ENCODE measurements at regions of chr5 and their contacts with region 1.

Region 1: DNA sequence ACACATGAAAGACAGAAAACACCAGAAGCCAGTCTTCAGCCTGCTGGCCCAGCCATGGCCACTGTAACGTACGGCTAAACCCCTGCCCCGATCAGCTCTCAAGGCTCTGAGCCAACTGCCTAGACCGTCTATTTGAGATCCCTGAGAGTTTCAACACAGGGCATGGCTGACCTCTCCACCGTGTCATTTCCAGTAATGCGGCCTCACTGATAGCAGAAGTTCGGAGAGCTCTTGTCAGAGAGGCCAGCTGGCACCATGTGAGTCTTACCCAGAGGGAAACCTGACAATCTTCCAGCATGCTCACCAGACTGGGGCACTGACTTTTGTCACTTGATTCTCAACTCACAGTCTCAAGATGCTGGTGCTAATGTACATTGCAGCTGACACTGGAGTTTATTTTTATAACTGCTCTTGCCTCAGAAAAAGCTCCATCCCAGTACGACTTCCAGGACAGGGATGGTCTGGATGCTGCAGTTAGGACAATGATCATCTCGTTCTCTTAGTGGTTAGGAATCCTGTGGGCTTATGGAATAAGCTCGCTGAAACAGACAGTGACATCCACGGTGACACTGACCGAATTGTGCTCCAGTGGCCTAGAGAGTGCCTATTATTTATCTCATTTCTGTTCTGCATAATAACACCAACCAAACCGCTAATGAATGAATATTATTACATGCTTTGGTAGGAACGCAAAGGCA is 372.7 kb downstream of the ICE1 start:
- DNase-seq: peak; percentile 81

Region 2: GRCh38 chr5:5638211-5638610 is 157.0 kb before region 1 on chr5:
- intact Hi-C with region 1: loop called (anchors 5 kb)
- DNase-seq: no peak

Region 3: GRCh38 chr5:5688194-5688924 is 106.9 kb before region 1 on chr5:
- intact Hi-C with region 1: loop called (anchors 5 kb)
- DNase-seq: no peak

Region 4: DNA sequence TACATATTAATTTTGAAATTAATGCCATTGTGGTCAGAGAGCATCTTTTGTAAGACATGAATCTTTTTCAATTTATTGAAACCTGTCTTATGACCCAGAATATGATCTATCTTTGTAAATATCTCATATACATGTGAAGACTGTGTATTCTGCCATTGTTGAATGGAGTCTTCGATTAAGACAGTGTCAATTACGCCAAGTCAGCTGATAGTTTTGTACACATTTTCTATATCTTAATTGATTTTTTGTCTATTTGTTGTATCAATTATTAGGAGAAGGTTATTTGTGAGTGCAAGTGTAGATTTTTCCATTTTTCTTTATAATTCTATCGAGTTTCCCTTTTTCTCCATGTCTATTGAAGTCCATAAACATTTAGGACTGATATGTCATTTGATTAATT is 111.6 kb after region 1 on chr5:
- intact Hi-C with region 1: no loop called
- DNase-seq: no peak

Measured in cardiac septum (tissue), 1 donor.